ENCODE measurements at regions of chr4 and their contacts with region 1.

Region 1: DNA sequence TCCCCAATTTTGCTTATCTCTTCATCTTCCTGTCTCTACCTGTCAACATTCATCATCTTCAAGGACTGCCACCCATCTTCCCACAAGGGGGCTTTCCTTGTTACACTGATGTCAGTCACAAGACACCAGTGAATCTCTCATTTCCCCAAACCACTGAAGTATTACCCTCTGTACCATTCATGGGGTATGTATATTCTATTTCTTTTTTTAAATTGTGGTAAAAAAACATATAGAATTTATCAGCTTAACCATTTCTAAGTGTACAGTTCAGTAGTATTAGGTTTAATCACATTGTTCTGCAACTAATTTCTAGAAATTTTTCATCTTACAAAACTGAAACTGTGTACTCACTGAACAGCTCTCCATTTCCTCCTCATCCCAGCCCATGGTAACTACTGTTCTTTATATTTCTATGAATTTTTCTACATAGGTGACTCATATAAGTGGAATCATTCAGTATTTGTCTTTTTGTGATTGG is 98.6 kb downstream of the LARP7 start:
- DNase-seq: peak; percentile 23
- ATAC-seq: peak; percentile 94
- H3K4me3 Mint-ChIP-seq: no peak overlapping the region
- H3K27ac Mint-ChIP-seq: peak overlapping the region; percentile 72
- H3K4me1 Mint-ChIP-seq: peaks cover 18% of the 10 kb centered on the region
- H3K27me3 Mint-ChIP-seq: no peaks in the 10 kb centered on the region

Region 2: DNA sequence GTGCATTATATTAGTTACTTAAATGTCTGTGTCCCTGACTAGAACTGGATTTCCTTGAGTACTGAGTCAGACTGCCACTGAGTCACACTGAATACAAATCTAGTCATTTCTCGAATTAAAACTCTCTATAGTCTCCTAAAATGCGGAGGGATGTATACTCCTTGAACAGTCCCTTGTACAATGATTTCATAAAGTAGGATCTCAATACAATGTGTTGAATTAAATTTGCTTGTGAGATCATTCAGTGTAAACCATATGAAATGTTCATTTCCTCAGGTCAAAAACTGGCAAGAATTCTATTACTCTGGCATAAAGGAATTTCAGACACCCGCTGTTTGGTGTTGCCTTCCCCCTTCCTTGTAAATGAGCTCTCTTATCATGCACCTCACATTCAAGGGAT is 607.7 kb before region 1 on chr4:
- CTCF ChIA-PET with region 1: no interaction called
- POLR2A ChIA-PET with region 1: no interaction called
- intact Hi-C with region 1: loop called in 1 of 2 experiments (anchors 10 kb)
- DNase-seq: no peak
- ATAC-seq: peak; percentile 100
- H3K4me3 Mint-ChIP-seq: no peak overlapping the region
- H3K27ac Mint-ChIP-seq: no peak overlapping the region
- H3K4me1 Mint-ChIP-seq: peaks cover 13% of the 10 kb centered on the region
- H3K27me3 Mint-ChIP-seq: peaks cover 3% of the 10 kb centered on the region

Region 3: GRCh38 chr4:112270640-112271393 is 464.7 kb before region 1 on chr4:
- CTCF ChIA-PET with region 1: no interaction called
- POLR2A ChIA-PET with region 1: no interaction called
- intact Hi-C with region 1: loop called in 1 of 2 experiments (anchors 5 kb)
- DNase-seq: no peak
- ATAC-seq: peak; percentile 44
- H3K4me3 Mint-ChIP-seq: no peak overlapping the region
- H3K27ac Mint-ChIP-seq: peak overlapping the region; percentile 80
- H3K4me1 Mint-ChIP-seq: peaks cover 57% of the 10 kb centered on the region
- H3K27me3 Mint-ChIP-seq: no peaks in the 10 kb centered on the region

Region 4: GRCh38 chr4:112807083-112807482 is 71.6 kb after region 1 on chr4:
- CTCF ChIA-PET with region 1: no interaction called
- POLR2A ChIA-PET with region 1: no interaction called
- intact Hi-C with region 1: no loop called
- DNase-seq: no peak
- ATAC-seq: no peak
- H3K4me3 Mint-ChIP-seq: no peak overlapping the region
- H3K27ac Mint-ChIP-seq: no peak overlapping the region
- H3K4me1 Mint-ChIP-seq: no peaks in the 10 kb centered on the region
- H3K27me3 Mint-ChIP-seq: peaks cover 8% of the 10 kb centered on the region

Measured in activated CD4-positive, alpha-beta T cell treated with anti-CD3 and anti-CD28 coated beads for 36 hours (primary cell).